Prostate gland (tissue), 2 donors: ENCODE measurements at regions of chr22 and their contacts with region 1.

Region 1: DNA sequence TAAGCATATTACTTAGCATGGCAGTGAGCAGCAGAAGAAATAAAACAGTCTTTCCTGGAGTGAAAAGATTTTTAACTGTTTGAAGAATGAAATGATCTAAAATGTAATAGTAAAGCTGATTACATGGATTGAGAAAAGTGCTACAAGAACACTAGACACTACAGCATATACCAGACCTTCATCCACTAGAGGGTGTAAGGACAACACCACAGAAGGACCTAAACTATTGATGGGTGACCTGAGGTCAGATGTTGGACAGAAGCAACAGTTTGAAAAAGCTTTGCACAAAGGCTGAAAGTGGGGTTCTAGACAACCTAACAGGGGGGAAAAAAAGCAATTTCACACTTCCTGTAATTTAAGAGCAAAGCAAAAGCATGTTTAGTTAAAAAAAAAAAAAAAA is 97.7 kb downstream of the RBFOX2 start:
- DNase-seq: no peak
- H3K4me3 ChIP-seq: no peak overlapping the region
- H3K27ac ChIP-seq: no peak overlapping the region
- H3K4me1 ChIP-seq: peaks cover 3% of the 10 kb centered on the region
- H3K27me3 ChIP-seq: no peaks in the 10 kb centered on the region
- CTCF ChIP-seq: peak in 3 of 4 experiments; percentile 53 to 75 (median 68)
- POLR2A ChIP-seq: no peak

Region 2: DNA sequence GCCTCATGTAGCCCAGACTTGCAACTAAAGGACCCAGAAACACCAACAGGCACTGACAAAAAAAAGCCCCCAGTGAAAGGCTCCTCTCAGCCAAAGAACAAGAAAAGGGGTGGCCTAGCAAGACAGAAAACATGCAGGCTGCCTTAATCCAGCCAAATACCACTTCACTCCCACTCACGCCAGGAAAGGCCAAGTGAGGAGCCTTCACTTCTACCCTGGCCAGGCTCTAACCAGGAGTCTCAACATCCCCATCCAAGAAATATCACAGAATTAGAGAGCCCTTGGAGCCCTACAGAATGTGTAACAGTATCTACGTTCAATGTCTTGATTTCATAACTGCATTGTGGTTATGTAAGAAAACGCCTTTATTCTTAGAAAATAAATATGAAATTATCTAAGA is 64.3 kb before region 1 on chr22:
- intact Hi-C with region 1: no loop called
- DNase-seq: no peak
- H3K4me3 ChIP-seq: no peak overlapping the region
- H3K27ac ChIP-seq: no peak overlapping the region
- H3K4me1 ChIP-seq: no peaks in the 10 kb centered on the region
- H3K27me3 ChIP-seq: no peaks in the 10 kb centered on the region
- CTCF ChIP-seq: no peak
- POLR2A ChIP-seq: no peak

Region 3: DNA sequence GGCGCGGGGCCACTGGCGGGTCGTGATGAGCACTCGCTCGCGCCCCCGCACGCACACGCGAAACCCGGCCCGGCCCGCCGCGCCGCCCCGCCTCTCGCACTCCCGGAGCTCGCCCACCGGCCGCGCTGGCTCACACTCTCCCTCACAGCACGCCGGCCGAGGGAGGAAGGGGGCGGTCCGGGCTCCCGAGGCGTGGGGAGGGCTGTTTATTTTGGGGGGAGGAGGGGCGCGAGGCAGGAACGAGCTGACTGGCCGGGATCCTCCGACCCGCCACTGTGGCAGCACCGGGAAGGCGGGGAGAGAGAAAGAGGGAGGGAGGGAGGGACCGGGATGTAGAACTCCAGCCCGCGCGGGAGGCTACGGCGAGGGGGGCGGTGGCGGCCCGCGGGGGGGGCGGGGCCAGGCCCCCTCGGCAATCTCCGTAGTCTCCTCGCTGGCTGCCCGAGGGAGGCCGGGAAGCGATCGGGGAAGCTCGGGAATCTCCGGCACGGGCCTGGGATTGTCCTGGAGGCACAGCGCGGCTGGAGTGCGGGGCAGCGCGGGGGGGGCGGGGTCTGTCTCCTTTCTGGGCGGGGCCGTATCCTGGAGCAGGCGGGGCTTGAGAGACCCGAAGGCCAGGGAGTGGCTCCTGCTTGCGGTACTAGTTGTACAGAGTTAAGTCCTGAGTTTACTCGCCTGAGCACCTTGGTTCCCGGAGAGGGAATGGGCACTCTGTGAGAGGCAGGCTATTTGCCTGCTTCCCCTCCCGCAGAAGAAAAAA is 97.9 kb after region 1 on chr22 and contains the start of gene RBFOX2:
- intact Hi-C with region 1: loop called (anchors 10 kb)
- DNase-seq: peak; percentile 97
- H3K4me3 ChIP-seq: peak within 1 kb of the TSS; percentile 83 to 90
- H3K27ac ChIP-seq: peak within 1 kb of the TSS; percentile 89 to 92
- H3K4me1 ChIP-seq: no peaks in the 10 kb centered on the region
- H3K27me3 ChIP-seq: no peaks in the 10 kb centered on the region
- CTCF ChIP-seq: no peak
- POLR2A ChIP-seq: peak; percentile 55
- total RNA-seq, gene RBFOX2: 59.8 to 79.4 TPM

Region 4: GRCh38 chr22:36065775-36066559 is 135.0 kb after region 1 on chr22:
- intact Hi-C with region 1: loop called (anchors 2 kb)
- DNase-seq: peak; percentile 87
- H3K4me3 ChIP-seq: peak overlapping the region; percentile 38 to 42
- H3K27ac ChIP-seq: peak overlapping the region; percentile 75 to 92
- H3K4me1 ChIP-seq: no peaks in the 10 kb centered on the region
- H3K27me3 ChIP-seq: no peaks in the 10 kb centered on the region
- CTCF ChIP-seq: peak; percentile 99 to 100 (median 100)
- POLR2A ChIP-seq: peak; percentile 20

Region 5: DNA sequence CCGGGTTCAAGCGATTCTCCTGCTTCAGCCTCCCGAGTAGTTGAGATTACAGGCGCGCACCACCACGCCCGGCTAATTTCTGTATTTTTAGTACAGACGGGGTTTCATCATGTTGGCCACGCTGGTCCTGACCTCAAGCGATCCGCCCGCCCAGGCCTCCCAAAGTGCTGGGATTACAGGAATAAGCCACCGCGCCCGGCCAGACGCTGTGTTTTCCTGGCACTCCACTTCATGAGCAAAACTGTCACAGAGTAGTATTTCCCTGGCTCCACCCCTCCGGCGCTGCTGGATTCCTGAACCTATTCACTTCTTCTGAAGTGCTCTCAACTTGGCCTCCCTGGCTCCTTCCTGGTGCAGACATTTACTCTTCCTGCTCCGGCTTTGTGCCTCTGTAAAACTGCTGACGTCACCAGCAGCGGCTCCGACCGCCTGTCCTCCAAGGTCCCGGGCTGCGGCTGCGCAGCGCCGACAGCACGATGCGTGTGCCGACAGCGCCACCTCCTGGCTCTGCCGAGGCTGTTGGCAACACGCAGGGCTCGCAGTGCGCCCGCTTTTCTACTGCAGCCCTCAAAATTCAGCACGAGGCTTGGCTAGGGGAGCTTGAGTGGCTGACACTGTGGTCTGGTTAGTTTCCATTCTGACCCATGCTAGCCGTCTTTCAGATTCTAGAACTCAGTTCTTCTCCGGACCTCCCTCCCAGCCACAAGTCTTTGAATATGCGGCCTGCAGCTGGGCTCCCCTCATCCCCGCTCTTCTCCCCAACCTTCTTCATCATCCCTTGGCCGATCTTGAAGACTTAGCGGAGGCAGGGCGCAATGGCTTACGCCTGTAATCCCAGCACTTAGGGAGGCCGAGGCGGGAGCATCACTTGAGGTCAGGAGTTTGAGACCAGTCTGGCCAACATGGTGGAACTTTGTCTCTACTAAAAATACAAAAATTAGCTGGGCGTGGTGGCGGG is 193.0 kb after region 1 on chr22:
- intact Hi-C with region 1: loop called (anchors 2 kb)
- DNase-seq: peak; percentile 95
- H3K4me3 ChIP-seq: no peak overlapping the region
- H3K27ac ChIP-seq: peak overlapping the region; percentile 83 to 87
- H3K4me1 ChIP-seq: no peaks in the 10 kb centered on the region
- H3K27me3 ChIP-seq: no peaks in the 10 kb centered on the region
- CTCF ChIP-seq: peak; percentile 95 to 100 (median 100)
- POLR2A ChIP-seq: peak; percentile 56